AG04450 (cell line): ENCODE measurements at regions of chr21 and their contacts with region 1.

Region 1: DNA sequence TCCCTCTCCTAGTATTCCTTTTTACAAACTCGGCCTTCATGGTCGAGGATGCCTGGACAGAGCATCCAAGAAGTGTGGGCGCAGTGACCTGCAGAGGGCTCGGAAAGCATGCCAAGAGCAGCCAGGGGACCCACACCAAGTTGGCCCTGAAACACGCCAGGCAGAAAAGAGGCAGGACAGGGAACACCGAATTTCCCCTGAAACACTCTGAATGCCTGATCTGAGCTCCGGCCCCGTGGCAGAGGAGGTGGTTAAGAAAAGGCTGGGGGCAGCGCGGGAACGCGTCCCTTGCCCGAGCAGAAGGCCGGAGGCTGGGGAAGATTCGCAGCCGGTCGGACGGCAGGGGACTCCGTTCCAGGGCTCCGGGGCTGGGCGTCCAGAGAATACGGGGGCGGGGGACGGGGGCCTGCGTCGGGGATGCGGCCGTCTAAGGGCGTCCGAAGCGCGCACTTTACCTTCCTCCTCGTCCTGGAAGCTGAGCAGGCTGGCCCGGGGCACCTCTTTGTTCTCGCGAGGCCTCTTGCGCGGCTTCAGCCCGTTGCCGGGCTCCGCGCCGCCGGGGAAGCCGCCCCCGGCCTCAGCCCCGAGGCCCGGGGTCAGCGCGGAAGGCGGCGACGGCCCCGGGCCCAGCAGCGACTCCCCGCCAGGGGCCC is 558 bp downstream of the PAXBP1 start:
- DNase-seq: peak; percentile 20
- H3K4me3 ChIP-seq: peak overlapping the region; percentile 66
- H3K27ac ChIP-seq: peak overlapping the region; percentile 78
- H3K27me3 ChIP-seq: no peaks in the 10 kb centered on the region
- CTCF ChIP-seq: no peak

Region 2: DNA sequence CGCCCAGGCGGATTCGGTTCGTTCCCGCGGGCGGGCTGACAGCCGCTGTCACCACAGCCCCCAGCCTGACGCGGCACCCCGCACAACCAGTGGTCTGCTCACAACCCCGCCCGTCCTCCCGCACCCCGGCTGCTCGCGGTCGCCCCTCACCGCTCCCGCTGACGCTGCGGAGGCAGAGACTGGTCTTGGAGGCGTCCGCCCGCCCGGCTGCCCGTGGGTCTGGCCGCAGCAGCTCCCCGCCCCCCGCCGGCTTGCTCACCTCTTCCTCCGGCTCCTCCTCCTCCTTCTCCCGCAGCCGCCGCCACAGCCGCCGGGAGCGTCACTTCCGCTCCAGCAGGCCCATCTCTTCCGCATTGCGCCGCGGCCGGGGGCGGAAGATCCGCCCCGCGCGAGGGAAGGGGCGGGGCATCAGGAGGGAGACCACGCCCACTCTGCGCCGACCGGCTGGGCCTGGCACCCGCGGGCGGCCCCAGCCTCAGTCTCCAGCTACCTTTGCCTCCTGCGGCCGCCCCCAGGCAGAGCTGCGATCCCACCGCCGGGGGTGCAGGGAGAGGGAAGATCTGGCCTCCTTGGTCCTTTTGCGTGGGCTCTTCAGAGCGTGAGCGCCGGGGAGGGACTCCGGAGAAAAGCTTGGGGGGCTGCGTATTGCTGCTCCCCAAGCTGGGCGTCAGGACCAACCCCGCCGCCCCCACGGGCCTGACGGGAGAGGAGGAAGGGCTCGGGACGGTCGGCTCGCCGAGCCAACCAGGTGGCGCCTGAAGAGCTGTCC is 43.1 kb before region 1 on chr21 and contains the start of gene SYNJ1:
- CTCF ChIA-PET with region 1: interaction called, 5 read pairs
- POLR2A ChIA-PET with region 1: interaction called, 27 read pairs
- DNase-seq: peak; percentile 69
- H3K4me3 ChIP-seq: peak within 1 kb of the TSS; percentile 90
- H3K27ac ChIP-seq: peak within 1 kb of the TSS; percentile 87
- H3K27me3 ChIP-seq: no peaks in the 10 kb centered on the region
- CTCF ChIP-seq: no peak
- polyA plus RNA-seq, gene SYNJ1: 5.6 and 7.3 TPM in 2 replicates

Region 3: DNA sequence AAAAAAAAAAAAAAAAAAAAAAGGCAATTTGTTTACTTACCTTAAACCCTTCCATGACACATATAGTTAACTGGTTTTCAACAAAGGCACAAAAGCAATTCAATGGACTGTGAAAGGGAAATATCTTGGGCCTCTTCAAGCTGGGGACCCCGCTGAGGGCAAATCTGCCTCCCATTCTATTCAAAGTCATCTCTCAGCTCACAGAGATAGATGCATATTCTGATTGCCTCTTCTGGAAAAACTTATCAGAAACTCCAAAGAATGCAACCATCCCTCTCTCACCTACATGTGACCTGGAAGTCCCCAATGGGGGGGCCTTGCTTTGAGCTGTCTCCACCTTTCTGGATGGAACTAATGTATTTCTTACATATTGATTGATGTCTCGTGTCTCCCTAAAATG is 31.1 kb before region 1 on chr21:
- CTCF ChIA-PET with region 1: no interaction called
- POLR2A ChIA-PET with region 1: interaction called, 11 read pairs
- DNase-seq: no peak
- H3K4me3 ChIP-seq: no peak overlapping the region
- H3K27ac ChIP-seq: no peak overlapping the region
- H3K27me3 ChIP-seq: no peaks in the 10 kb centered on the region
- CTCF ChIP-seq: no peak

Region 4: DNA sequence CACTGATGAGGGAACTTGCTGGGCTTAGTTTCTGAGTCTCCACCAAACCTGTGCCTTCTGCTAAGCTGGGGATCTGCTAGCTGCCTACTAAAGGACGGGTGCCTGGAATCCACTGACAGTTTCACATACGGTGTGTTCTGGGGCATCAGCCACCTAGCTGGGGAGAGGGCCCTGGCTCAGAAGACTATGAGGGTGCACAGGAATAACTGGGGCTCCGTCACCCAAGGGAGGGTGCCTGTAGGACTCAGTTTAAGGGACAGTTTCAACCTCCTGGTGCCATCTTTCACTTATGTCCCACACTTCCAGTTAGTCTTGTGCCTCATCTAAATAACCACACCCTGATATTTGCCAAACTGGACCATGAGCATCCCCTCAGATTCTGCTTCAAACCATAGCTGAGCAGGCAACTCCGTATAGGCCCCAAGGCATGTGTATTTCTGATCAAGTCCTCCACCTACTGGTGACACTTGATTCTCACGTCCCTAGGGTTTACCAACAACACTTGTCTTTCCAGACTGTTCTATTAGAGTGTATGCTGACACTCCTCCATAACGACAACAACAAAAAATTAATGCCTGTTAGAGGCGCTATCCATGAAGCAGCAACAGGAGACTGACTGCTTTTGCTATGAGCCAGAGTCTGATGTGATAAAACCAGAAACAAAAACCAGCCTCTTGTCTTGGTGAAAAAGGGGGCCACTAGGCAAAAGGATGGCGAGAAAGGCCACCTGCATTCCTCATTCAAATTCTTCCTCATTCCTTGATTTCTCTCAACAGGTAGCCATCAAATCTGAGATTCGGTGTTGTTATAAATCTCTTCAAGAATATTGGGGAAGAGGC is 55.6 kb after region 1 on chr21:
- CTCF ChIA-PET with region 1: interaction called, 16 read pairs
- POLR2A ChIA-PET with region 1: interaction called, 3 read pairs
- DNase-seq: peak; percentile 20
- H3K4me3 ChIP-seq: no peak overlapping the region
- H3K27ac ChIP-seq: no peak overlapping the region
- H3K27me3 ChIP-seq: no peaks in the 10 kb centered on the region
- CTCF ChIP-seq: peak; percentile 65